ENCODE measurements at regions of chr12 and their contacts with region 1.

Region 1: DNA sequence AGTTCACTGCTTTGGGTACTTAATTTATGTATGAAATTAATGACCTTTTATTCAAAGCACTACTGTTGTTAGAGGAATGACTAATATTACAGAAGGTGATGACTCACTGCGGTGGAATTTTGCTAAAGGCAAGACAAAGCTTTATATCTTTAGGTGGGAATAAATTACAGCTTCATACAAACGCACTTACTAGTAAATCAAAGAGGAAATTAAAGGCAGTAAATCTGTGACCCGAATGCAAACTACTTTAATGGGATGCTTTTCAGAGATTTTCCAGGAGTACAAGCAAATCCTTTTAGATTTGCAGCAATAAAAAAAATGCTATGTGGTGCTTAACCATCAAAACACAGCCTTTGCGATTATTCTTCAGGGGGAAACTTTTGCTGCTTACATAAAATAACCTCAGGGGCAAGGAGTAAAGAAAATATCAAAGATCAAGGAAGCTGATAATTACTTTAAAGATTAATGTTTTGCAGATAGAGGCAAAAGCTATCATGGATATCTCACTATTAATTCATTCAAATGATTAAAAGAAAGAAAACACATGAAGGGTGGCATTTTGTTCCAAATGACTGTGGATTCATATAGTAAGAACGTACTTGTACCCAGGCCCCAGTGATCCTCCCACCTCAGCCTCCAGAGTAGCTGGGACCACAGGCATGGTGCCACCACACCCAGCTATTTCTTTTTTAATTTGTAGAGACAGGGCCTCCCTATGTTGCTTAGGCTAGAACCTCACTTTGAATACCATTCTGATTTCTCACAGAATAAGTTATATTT is 98.9 kb downstream of the DENND5B start:
- DNase-seq: peak; percentile 60
- H3K4me3 Mint-ChIP-seq: peak overlapping the region; percentile 38
- H3K27ac Mint-ChIP-seq: peak overlapping the region; percentile 80
- H3K4me1 Mint-ChIP-seq: peaks cover 49% of the 10 kb centered on the region
- H3K27me3 Mint-ChIP-seq: no peaks in the 10 kb centered on the region
- CTCF ChIP-seq: no peak

Region 2: GRCh38 chr12:30074916-30075315 is 1417.1 kb before region 1 on chr12:
- CTCF ChIA-PET with region 1: no interaction called
- intact Hi-C with region 1: no loop called
- DNase-seq: no peak
- H3K4me3 Mint-ChIP-seq: no peak overlapping the region
- H3K27ac Mint-ChIP-seq: no peak overlapping the region
- H3K4me1 Mint-ChIP-seq: no peaks in the 10 kb centered on the region
- H3K27me3 Mint-ChIP-seq: peaks cover 11% of the 10 kb centered on the region
- CTCF ChIP-seq: no peak

Region 3: DNA sequence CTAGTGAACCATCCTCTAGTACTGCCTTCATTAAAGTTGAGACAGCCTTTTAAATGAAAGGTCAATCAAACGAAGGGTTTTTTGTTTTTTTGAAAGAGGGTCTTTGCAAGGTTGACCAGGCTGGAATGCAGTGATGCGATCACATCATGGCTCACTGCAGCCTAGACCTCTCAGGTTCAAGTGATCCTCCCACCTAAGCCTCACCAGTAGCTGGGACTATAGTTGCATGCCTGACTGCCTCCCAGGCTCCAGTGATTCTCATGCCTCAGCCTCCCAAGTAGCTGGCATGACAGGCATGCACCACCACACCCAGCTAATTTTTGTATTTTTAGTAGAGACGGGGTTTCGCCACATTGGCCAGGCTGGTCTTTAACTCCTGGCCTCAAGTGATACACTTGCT is 51.4 kb before region 1 on chr12:
- CTCF ChIA-PET with region 1: no interaction called
- intact Hi-C with region 1: no loop called
- DNase-seq: no peak
- H3K4me3 Mint-ChIP-seq: no peak overlapping the region
- H3K27ac Mint-ChIP-seq: no peak overlapping the region
- H3K4me1 Mint-ChIP-seq: no peaks in the 10 kb centered on the region
- H3K27me3 Mint-ChIP-seq: no peaks in the 10 kb centered on the region
- CTCF ChIP-seq: no peak

Region 4: DNA sequence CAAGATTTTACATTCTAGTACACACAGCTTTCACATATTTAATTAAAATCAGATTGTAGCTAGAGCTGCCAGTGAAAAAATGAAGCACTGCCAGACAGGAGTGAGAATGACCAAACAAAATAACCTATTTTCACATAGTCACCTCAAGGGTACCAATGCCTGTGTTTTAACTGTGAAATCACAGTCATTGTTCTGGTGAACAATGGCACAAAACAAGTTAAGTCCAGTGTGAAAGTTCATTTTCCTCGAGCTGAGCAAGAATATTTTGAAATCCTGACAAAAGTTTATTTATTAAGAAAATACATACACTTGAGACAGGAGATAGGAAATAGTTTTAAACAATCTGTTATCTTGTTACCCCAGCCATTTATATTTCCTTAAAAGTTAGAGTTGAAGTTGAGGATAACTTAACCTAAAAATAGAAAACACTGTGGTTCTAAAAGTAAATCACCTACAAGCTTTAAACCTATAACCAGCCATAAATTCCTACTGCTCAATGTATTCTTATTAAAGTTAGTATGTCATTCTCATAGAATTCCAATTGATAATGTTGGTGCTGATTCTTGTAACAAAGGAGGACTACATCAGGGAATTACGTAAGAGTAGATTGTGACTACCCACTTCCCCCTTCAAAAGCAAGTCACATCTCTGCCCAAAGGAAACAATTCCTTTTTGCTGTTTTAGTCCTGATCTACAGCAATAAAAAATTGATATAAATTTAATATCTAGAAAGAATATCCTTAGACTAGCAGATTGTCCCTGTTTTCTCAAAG is 83.0 kb after region 1 on chr12:
- CTCF ChIA-PET with region 1: no interaction called
- intact Hi-C with region 1: loop called (anchors 5 kb)
- DNase-seq: no peak
- H3K4me3 Mint-ChIP-seq: no peak overlapping the region
- H3K27ac Mint-ChIP-seq: no peak overlapping the region
- H3K4me1 Mint-ChIP-seq: no peaks in the 10 kb centered on the region
- H3K27me3 Mint-ChIP-seq: no peaks in the 10 kb centered on the region
- CTCF ChIP-seq: no peak

Region 5: GRCh38 chr12:31589904-31590641 is 98.1 kb after region 1 on chr12:
- CTCF ChIA-PET with region 1: no interaction called
- intact Hi-C with region 1: loop called (anchors 5 kb)
- DNase-seq: peak; percentile 65
- H3K4me3 Mint-ChIP-seq: peak overlapping the region; percentile 93
- H3K27ac Mint-ChIP-seq: peak overlapping the region; percentile 79
- H3K4me1 Mint-ChIP-seq: peaks cover 24% of the 10 kb centered on the region
- H3K27me3 Mint-ChIP-seq: no peaks in the 10 kb centered on the region
- CTCF ChIP-seq: no peak

Region 6: DNA sequence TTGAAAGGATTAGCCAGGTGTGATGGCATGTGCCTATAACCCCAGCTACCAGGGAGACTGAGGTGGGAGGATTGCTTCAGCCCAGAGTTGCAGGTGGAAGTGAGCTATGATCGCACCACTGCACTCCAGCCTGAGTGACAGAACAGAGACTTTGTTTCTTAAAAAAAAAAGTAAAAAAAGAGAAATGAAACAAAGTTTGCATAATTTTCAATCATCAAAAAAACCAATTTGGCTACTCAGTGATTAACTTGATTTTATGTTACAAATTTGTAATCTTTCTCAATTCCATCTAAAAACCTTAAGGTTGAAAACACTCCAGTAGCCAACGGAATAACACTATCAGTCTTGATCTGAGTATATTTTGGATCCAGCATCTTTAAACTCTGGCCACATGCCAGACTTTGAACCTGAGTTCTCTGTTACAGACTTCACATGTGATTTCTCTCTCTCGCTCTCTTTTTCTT is 111.6 kb after region 1 on chr12:
- CTCF ChIA-PET with region 1: no interaction called
- intact Hi-C with region 1: no loop called
- DNase-seq: no peak
- H3K4me3 Mint-ChIP-seq: no peak overlapping the region
- H3K27ac Mint-ChIP-seq: no peak overlapping the region
- H3K4me1 Mint-ChIP-seq: no peaks in the 10 kb centered on the region
- H3K27me3 Mint-ChIP-seq: no peaks in the 10 kb centered on the region
- CTCF ChIP-seq: no peak

Region 7: GRCh38 chr12:31629756-31630732 is 138.0 kb after region 1 on chr12:
- CTCF ChIA-PET with region 1: no interaction called
- intact Hi-C with region 1: loop called (anchors 10 kb)
- DNase-seq: no peak
- H3K4me3 Mint-ChIP-seq: no peak overlapping the region
- H3K27ac Mint-ChIP-seq: no peak overlapping the region
- H3K4me1 Mint-ChIP-seq: no peaks in the 10 kb centered on the region
- H3K27me3 Mint-ChIP-seq: no peaks in the 10 kb centered on the region
- CTCF ChIP-seq: no peak

Measured in Calu3 (cell line).